ENCODE measurements at regions of chr6 and their contacts with region 1.

Region 1: DNA sequence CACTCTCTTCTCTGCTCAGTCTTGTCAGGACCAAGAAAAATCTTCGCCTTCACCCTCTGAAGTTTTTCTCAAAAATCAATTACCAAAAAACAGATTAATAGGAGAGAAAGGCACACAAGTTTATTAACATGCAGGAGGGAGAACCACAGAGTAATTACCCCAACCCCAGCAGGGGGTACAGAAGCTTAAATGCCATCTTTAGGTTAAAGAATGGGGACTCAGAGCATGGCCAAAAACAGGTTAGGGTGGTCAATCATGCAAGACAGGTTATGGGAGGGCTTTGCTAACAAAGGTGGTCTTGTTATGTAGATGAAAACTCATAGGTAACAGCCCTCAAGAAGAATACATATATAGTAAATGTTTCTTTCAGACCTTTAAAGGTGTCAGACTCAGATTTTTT is 100.5 kb upstream of the BTN3A2 start:
- DNase-seq: no peak
- ATAC-seq: no peak
- H3K4me3 ChIP-seq: no peak overlapping the region
- H3K27ac ChIP-seq: no peak overlapping the region
- H3K4me1 ChIP-seq: no peaks in the 10 kb centered on the region
- H3K27me3 ChIP-seq: no peaks in the 10 kb centered on the region
- CTCF ChIP-seq: no peak

Region 2: DNA sequence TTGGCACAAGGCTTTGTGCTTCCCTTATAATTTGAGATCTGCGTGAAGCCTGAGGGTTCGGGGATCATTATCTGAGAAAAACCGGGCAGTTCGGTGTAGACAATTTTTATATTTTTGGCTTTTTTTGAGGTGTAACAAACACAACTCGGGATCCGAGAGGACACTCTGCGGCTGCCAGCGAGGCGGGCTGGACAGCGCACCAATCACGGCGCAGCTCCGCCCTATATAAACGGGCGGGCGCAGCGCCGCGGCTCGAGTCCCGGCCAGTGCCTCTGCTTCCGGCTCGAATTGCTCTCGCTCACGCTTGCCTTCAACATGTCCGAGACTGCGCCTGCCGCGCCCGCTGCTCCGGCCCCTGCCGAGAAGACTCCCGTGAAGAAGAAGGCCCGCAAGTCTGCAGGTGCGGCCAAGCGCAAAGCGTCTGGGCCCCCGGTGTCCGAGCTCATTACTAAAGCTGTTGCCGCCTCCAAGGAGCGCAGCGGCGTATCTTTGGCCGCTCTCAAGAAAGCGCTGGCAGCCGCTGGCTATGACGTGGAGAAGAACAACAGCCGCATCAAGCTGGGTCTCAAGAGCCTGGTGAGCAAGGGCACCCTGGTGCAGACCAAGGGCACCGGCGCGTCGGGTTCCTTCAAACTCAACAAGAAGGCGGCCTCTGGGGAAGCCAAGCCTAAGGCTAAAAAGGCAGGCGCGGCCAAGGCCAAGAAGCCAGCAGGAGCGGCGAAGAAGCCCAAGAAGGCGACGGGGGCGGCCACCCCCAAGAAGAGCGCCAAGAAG is 108.3 kb before region 1 on chr6:
- CTCF ChIA-PET with region 1: no interaction called
- POLR2A ChIA-PET with region 1: no interaction called
- in situ Hi-C with region 1: no loop called
- intact Hi-C with region 1: no loop called
- DNase-seq: peak; percentile 87
- ATAC-seq: peak; percentile 82
- H3K4me3 ChIP-seq: peak overlapping the region; percentile 59 to 94
- H3K27ac ChIP-seq: peak overlapping the region; percentile 99
- H3K4me1 ChIP-seq: peaks cover 11% of the 10 kb centered on the region
- H3K27me3 ChIP-seq: no peaks in the 10 kb centered on the region
- CTCF ChIP-seq: no peak

Region 3: DNA sequence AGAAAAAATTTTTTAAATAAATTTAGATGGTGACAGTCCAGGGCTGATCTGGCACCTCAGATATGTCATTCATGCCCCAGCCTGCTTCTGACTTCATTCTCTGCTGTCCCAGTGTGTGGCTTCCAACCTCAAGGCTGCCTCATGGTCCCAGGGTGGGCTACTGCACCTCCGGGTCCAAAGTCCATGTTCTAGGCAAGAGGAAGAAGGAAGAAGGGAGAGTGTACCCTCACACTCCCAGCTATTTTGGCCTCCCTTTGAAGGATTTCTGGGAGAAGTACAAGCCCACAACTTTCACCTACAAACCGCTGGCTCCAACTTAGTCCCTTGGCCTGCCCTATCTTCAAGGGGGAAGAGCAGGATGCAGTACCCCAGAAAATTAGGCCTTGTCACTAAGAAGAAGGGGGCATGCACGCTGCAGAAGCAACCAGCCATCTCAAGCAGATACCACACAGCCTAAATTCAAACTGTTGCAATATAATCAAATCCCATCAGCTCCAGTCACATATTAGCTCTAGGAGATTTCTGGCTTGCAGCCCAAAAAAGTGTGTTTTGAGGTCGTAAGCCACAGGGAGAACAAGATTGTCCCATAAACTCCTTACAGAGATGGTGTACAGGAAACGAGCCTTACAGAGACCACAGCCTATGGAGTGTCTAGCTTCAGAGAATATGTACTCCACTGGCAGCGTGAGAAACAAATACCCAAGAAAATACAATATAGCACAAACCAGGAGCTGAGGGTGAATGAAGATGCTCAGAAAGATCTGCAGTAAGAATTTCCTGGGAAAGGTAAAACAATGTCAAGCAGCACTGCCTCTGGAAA is 99.5 kb after region 1 on chr6:
- CTCF ChIA-PET with region 1: no interaction called
- POLR2A ChIA-PET with region 1: interaction called, 14 read pairs
- in situ Hi-C with region 1: no loop called
- intact Hi-C with region 1: no loop called
- DNase-seq: no peak
- ATAC-seq: peak; percentile 51; the same call in 1 of the 2 replicates
- H3K4me3 ChIP-seq: peak overlapping the region; percentile 66 to 68
- H3K27ac ChIP-seq: peak overlapping the region; percentile 84
- H3K4me1 ChIP-seq: peaks cover 4% of the 10 kb centered on the region
- H3K27me3 ChIP-seq: no peaks in the 10 kb centered on the region
- CTCF ChIP-seq: no peak